AG04450 (cell line): ENCODE measurements at regions of chr1 and their contacts with region 1.

Region 1: GRCh38 chr1:180112984-180113647 is 41.6 kb upstream of the QSOX1 start:
- DNase-seq: no peak
- H3K4me3 ChIP-seq: no peak overlapping the region
- H3K27ac ChIP-seq: peak overlapping the region; percentile 33
- H3K27me3 ChIP-seq: no peaks in the 10 kb centered on the region
- CTCF ChIP-seq: no peak

Region 2: DNA sequence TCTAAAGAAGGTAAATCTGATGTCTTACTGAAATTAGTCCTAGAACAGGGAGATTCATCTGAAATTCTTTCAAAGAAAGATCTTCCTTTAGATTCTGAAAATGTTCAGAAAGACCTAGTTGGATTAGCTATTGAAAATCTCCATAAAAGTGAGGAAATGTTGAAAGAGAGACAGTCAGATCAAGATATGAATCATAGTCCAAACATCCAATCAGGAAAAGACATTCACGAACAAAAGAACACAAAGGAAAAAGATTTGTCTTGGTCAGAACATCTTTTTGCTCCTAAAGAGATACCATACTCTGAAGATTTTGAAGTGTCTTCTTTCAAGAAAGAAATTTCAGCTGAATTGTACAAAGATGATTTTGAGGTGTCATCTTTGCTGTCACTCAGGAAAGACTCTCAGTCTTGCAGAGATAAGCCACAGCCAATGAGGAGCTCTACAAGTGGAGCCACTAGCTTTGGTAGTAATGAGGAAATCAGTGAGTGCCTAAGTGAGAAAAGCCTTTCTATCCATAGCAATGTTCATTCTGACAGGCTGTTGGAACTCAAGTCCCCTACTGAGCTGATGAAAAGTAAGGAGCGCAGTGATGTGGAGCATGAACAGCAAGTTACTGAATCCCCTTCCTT is 20.1 kb before region 1 on chr1:
- CTCF ChIA-PET with region 1: interaction called, 3 read pairs
- POLR2A ChIA-PET with region 1: interaction called, 37 read pairs
- DNase-seq: no peak
- H3K4me3 ChIP-seq: no peak overlapping the region
- H3K27ac ChIP-seq: no peak overlapping the region
- H3K27me3 ChIP-seq: no peaks in the 10 kb centered on the region
- CTCF ChIP-seq: no peak

Region 3: GRCh38 chr1:180101411-180101810 is 11.7 kb before region 1 on chr1:
- CTCF ChIA-PET with region 1: interaction called, 3 read pairs
- POLR2A ChIA-PET with region 1: interaction called, 37 read pairs
- DNase-seq: no peak
- H3K4me3 ChIP-seq: no peak overlapping the region
- H3K27ac ChIP-seq: no peak overlapping the region
- H3K27me3 ChIP-seq: no peaks in the 10 kb centered on the region
- CTCF ChIP-seq: no peak

Region 4: GRCh38 chr1:180248731-180249681 is 135.9 kb after region 1 on chr1:
- CTCF ChIA-PET with region 1: no interaction called
- POLR2A ChIA-PET with region 1: no interaction called
- DNase-seq: no peak
- H3K4me3 ChIP-seq: no peak overlapping the region
- H3K27ac ChIP-seq: no peak overlapping the region
- H3K27me3 ChIP-seq: peaks cover 15% of the 10 kb centered on the region
- CTCF ChIP-seq: no peak